BJ (cell line): ENCODE measurements at regions of chr1 and their contacts with region 1.

Region 1: GRCh38 chr1:26799479-26800142 is 11.9 kb downstream of the PIGV start:
- DNase-seq: no peak
- H3K4me3 ChIP-seq: no peak overlapping the region
- H3K27me3 ChIP-seq: no peaks in the 10 kb centered on the region
- CTCF ChIP-seq: 0 out of 2 replicates have a peak, but pooled peaks have one; percentile 7

Region 2: GRCh38 chr1:26602378-26602959 is 197.1 kb before region 1 on chr1:
- CTCF ChIA-PET with region 1: interaction called, 15 read pairs
- POLR2A ChIA-PET with region 1: no interaction called
- DNase-seq: no peak
- H3K4me3 ChIP-seq: no peak overlapping the region
- H3K27me3 ChIP-seq: peaks cover 2% of the 10 kb centered on the region; the same call in 1 of the 2 replicates
- CTCF ChIP-seq: peak; percentile 73

Region 3: DNA sequence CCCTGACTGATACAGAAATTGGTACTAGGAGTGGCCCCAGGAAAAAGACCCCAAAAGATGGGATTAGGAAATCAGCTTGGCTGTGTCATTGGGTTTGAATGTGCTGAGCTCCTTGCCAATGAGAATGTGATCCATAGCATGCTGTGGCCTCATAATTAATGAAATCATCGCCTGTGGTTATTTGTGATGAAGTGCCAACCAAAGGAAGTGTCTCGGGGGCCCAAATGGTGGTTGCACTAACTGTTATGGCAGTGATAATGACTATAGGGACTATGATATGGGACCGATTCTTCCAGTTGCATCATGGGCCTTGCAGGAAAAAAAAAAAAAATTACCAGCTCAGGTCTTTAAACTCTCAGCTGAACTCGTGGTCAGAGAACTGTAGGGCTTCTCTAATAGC is 11.4 kb after region 1 on chr1:
- CTCF ChIA-PET with region 1: interaction called, 21 read pairs
- POLR2A ChIA-PET with region 1: no interaction called
- DNase-seq: no peak
- H3K4me3 ChIP-seq: no peak overlapping the region
- H3K27me3 ChIP-seq: no peaks in the 10 kb centered on the region
- CTCF ChIP-seq: no peak